RWPE1 (cell line): ENCODE measurements at regions of chr2 and their contacts with region 1.

Region 1: GRCh38 chr2:201882353-201883090 is 76.2 kb downstream of the CDK15 start:
- DNase-seq: no peak
- H3K27ac ChIP-seq: no peak overlapping the region
- CTCF ChIP-seq: no peak

Region 2: DNA sequence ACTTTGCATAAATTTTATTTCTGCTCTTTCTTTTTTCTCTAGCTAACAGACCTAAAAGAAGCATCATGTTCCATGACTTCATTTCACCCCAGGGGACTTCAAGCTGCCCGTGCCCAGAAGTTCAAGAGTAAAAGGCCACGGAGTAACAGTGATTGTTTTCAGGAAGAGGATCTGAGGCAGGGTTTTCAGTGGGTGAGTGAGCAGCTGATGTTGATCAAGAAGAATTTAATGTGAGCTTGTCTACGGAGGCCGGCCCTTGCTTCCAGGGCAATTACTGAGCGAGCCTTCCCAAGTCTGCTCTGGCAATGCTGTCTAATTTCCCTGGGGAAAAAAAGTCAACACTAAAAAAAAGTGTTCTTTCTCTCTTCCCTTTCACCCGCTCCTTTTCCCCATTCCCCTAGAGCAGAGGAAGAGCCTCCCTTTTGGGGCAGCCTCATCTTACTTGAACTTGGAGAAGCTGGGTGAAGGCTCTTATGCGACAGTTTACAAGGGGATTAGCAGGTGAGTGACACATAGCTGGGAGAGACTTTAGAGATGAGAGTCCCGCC is 75.0 kb before region 1 on chr2:
- CTCF ChIA-PET with region 1: interaction called, 10 read pairs
- POLR2A ChIA-PET with region 1: no interaction called
- DNase-seq: no peak
- H3K27ac ChIP-seq: no peak overlapping the region
- CTCF ChIP-seq: no peak